ENCODE measurements at regions of chr6 and their contacts with region 1.

Region 1: GRCh38 chr6:137707590-137708360 is 159.3 kb upstream of the TNFAIP3 start:
- DNase-seq: peak; percentile 73
- ATAC-seq: peak; percentile 56
- H3K4me3 ChIP-seq: peak overlapping the region; percentile 29; the same call in 1 of the 2 replicates
- H3K27ac ChIP-seq: peak overlapping the region; percentile 88; the same call in 1 of the 2 replicates
- H3K4me1 ChIP-seq: peaks cover 32% of the 10 kb centered on the region
- H3K27me3 ChIP-seq: no peaks in the 10 kb centered on the region
- CTCF ChIP-seq: peak; percentile 73

Region 2: DNA sequence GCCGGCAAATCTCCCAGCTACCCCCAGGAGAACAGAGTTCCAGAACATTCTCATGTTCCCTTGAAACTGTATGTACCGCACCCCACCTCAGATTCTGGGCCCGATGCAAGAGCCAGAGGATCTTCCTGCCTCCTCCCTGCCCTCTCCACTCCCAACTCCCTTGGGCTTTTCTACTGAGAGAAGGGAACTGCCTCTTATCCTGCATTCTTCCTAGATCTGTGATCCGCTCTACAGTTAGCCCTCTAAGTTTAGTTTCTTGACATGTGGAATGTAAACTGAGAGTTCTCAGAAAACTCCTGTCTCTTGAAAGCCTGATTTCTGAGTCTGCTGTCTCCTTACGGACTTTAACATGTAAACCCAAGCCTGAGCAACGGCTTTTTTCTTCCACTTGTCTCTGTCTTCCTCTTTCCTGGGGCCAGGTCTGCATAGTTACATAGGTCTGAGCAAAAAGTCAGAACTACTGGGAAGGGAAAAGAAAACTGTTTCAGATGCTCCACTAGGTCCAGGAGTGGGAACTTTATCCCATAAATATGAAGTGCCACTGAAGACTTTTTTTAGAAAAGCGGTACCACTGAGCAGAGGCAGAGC is 72.8 kb after region 1 on chr6:
- CTCF ChIA-PET with region 1: no interaction called
- POLR2A ChIA-PET with region 1: no interaction called
- intact Hi-C with region 1: no loop called
- DNase-seq: no peak
- ATAC-seq: no peak
- H3K4me3 ChIP-seq: no peak overlapping the region
- H3K27ac ChIP-seq: no peak overlapping the region
- H3K4me1 ChIP-seq: peaks cover 15% of the 10 kb centered on the region
- H3K27me3 ChIP-seq: no peaks in the 10 kb centered on the region
- CTCF ChIP-seq: no peak

Region 3: GRCh38 chr6:137808191-137808590 is 100.4 kb after region 1 on chr6:
- CTCF ChIA-PET with region 1: no interaction called
- POLR2A ChIA-PET with region 1: no interaction called
- intact Hi-C with region 1: loop called (anchors 5 kb)
- DNase-seq: peak; percentile 91
- ATAC-seq: peak; percentile 66
- H3K4me3 ChIP-seq: no peak overlapping the region
- H3K27ac ChIP-seq: peak overlapping the region; percentile 73
- H3K4me1 ChIP-seq: peaks cover 34% of the 10 kb centered on the region
- H3K27me3 ChIP-seq: no peaks in the 10 kb centered on the region
- CTCF ChIP-seq: no peak

Region 4: DNA sequence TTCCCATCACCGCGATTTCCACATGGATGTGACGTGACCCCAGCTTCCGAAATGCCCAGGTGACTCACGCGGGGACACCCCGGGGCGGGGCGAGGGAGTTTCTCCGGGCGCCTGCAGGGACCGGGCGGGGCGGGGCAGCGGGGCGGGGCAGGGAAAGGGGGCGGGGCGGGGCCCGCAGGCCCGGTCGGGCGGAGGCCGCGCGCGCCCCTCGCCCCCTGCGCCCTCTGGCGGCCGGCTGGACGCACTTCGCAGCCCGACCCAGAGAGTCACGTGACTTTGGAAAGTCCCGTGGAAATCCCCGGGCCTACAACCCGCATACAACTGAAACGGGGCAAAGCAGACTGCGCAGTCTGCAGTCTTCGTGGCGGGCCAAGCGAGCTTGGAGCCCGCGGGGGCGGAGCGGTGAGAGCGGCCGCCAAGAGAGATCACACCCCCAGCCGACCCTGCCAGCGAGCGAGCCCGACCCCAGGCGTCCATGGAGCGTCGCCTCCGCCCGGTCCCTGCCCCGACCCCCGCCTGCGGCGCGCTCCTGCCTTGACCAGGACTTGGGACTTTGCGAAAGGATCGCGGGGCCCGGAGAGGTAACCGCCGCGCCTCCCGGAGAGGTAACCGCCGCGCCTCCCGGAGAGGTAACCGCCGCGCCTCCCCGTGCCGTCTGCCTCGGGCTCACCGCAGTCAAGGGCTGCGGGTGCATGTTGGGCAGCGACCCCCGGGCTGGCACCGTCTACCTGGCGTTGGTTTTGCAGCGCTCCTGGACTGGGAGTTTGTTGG is 159.3 kb after region 1 on chr6 and contains the start of gene TNFAIP3:
- CTCF ChIA-PET with region 1: interaction called, 3 read pairs
- POLR2A ChIA-PET with region 1: interaction called, 6 read pairs
- intact Hi-C with region 1: loop called (anchors 1 kb)
- DNase-seq: peak; percentile 90
- ATAC-seq: peak; percentile 82
- H3K4me3 ChIP-seq: peak within 1 kb of the TSS; percentile 90
- H3K27ac ChIP-seq: peak within 1 kb of the TSS; percentile 68
- H3K4me1 ChIP-seq: peaks cover 31% of the 10 kb centered on the region
- H3K27me3 ChIP-seq: no peaks in the 10 kb centered on the region
- CTCF ChIP-seq: peak; percentile 47
- total RNA-seq, gene TNFAIP3: 21.9 TPM in 2 replicates

Region 5: DNA sequence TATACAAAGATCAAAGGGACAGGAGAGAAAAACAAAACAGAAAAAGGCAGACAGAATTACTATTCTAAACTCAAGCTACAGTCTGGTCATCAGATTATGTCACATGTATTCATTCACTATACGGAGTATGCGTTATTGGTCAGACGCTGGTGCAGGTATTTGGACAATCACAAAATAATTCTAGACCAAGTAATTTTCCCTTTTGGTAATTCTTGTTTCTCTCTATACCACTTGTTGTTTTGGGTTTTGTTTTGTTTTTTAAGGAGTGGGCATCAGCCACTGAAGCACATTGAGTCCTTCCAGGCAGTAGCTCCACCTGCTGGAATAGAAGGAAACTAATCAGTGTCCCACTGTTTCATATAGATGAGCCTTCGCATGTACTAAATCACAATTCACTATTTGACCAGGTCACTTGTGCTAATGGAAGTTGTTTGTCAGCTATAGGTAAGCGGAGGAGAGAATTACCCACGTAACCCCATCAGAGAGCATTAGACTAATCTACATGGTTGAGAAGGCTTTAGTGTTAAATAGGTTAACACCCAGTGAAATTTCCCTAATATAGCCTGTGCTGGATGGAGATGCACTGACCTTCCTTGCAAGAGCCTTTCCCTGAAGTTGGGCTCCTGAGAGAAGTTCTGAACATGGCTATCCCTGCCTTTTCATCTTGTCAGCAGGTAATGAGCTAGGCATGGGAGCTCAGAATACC is 237.2 kb after region 1 on chr6:
- CTCF ChIA-PET with region 1: no interaction called
- POLR2A ChIA-PET with region 1: no interaction called
- intact Hi-C with region 1: loop called (anchors 1 kb)
- DNase-seq: peak; percentile 48
- ATAC-seq: peak; percentile 70
- H3K4me3 ChIP-seq: no peak overlapping the region
- H3K27ac ChIP-seq: no peak overlapping the region
- H3K4me1 ChIP-seq: peaks cover 6% of the 10 kb centered on the region; the same call in 1 of the 2 replicates
- H3K27me3 ChIP-seq: no peaks in the 10 kb centered on the region
- CTCF ChIP-seq: peak; percentile 73

Region 6: DNA sequence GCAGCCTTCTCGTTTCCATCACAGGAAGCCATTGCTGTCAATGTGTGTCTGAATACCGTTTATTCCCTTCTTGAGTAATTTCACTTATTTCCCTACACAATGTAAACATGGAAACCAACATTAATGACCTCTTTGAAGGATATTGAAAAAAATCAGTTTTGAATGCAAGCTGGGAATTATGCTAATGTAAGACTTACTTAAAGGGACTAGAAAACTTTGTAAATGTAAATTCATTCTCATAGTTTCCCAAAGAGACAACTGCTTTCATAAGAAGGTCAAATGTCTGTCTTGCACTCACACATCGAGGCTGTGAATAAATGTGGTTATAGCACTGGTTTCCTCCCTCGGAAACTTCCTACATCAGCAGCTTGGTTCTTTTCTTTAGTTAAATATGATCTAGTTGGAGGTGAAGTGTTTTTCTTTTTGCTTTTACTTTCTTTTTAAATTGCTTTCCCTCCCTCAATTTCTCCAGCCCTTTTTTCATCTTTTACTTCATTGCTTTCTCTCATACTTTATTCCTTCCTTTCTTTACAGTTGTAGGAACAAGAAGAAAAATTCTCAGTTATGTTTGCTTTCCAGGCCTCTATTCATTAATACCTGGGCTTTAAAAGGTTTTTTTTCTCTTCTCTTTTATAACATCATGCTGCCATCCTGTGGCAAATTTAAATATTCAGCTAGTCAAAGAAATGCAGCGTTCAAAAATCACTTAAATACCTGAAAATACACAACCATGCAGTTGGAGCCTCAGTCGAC is 267.6 kb after region 1 on chr6:
- CTCF ChIA-PET with region 1: no interaction called
- POLR2A ChIA-PET with region 1: no interaction called
- intact Hi-C with region 1: loop called (anchors 1 kb)
- DNase-seq: peak; percentile 54
- ATAC-seq: no peak
- H3K4me3 ChIP-seq: no peak overlapping the region
- H3K27ac ChIP-seq: no peak overlapping the region
- H3K4me1 ChIP-seq: peaks cover 13% of the 10 kb centered on the region
- H3K27me3 ChIP-seq: no peaks in the 10 kb centered on the region
- CTCF ChIP-seq: peak; percentile 61

Region 7: GRCh38 chr6:138109042-138109997 is 401.5 kb after region 1 on chr6:
- CTCF ChIA-PET with region 1: interaction called, 3 read pairs
- POLR2A ChIA-PET with region 1: no interaction called
- intact Hi-C with region 1: loop called (anchors 5 kb)
- DNase-seq: peak; percentile 82
- ATAC-seq: no peak
- H3K4me3 ChIP-seq: peak overlapping the region; percentile 95; the same call in 1 of the 2 replicates
- H3K27ac ChIP-seq: peak overlapping the region; percentile 69
- H3K4me1 ChIP-seq: peaks cover 23% of the 10 kb centered on the region
- H3K27me3 ChIP-seq: no peaks in the 10 kb centered on the region
- CTCF ChIP-seq: peak; percentile 87

Measured in PC-3 (cell line).